Dendritic cell treated with granulocyte-macrophage colony-stimulating factor and Interleukin-4, amounts not matched to agents 40 ng/mL and 50 ng/mL, for 4 days (primary cell): ENCODE measurements at regions of chr5 and their contacts with region 1.

Region 1: DNA sequence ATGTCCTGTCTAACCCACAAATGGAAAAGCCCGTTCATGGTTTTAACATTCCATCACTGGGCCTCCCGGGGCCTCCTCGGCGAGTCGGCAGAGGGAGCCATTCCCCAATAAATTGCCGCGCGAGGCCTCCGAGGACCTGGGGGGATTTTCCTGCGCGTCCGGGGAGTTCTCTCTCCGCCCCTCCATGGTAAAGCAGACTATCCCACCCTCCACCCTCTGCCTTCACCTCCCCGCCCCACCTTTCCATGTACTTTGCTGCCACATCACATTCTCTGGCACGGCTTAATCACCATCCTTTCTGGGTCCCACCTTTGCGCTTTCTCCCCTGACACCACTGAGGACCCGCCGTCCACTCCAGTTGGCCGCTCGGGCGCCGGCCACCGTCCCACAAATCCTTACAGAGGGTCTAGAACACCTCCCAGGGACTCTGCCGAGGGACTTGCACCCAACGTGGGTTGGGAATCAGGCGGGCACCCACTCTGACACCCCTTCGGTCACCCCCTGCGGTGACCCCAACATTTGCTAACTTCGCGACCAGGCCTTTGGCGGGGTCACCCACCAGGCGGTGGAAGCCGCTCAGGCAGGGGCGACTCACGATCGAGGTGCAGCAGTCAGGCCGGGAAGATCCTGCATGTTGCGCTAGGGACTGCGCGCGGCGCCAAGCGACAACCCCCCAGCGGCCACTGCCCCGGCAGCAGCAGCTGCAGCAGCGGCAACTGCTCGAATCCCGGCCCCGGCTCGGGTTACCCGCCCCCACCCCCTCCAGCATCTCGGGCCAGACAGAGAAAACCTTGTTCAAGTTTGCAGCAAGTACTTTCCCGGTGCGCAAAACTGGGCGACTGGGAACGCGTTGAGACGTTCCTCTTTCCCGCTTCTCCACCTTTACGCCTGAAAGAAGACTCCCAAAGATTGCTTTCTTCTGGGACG is at the start of gene MEGF10:
- H3K4me3 Mint-ChIP-seq: no peak within 1 kb of the TSS
- H3K27ac Mint-ChIP-seq: no peak within 1 kb of the TSS
- H3K4me1 Mint-ChIP-seq: peaks cover 10% of the 10 kb centered on the region
- H3K27me3 Mint-ChIP-seq: peaks cover 41% of the 10 kb centered on the region

Region 2: DNA sequence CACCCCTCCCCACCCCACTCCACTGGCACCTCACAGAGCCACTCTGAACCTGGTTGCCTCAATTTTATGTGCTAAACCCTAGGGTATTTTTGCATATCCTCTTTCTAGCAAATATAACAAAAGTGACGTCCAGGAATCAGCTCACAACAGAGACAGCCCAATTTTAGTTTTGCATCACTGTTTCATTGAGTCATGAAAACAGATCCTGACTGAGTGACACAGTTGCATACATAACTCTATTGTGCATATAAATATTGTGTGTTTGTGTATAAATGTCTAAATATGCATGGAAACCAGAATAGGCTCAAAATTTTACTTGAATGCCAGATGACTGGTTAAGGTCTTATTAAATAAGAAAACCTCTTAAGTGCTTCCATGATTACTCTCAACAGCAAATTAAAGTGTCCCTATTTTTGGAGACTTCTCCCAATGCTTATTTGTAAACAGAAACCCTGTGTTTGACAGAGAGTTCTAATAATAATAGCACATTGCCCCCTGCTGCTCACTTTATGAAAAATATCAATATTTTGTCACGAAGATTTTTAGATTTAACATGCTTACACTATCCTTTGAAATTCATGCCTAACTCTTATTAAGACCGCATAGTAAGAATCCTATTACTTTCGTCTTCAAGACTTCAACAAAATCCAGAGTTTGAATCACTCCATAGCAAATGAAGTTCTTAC is 151.7 kb after region 1 on chr5:
- intact Hi-C with region 1: loop called (anchors 2 kb)
- H3K4me3 Mint-ChIP-seq: no peak overlapping the region
- H3K27ac Mint-ChIP-seq: no peak overlapping the region
- H3K4me1 Mint-ChIP-seq: no peaks in the 10 kb centered on the region
- H3K27me3 Mint-ChIP-seq: no peaks in the 10 kb centered on the region

Region 3: GRCh38 chr5:127492854-127493738 is 202.8 kb after region 1 on chr5:
- intact Hi-C with region 1: loop called (anchors 5 kb)
- H3K4me3 Mint-ChIP-seq: no peak overlapping the region
- H3K27ac Mint-ChIP-seq: no peak overlapping the region
- H3K4me1 Mint-ChIP-seq: no peaks in the 10 kb centered on the region
- H3K27me3 Mint-ChIP-seq: peaks cover 7% of the 10 kb centered on the region